ENCODE measurements at regions of chr12 and their contacts with region 1.

Region 1: GRCh38 chr12:10891937-10892336 is 7.9 kb upstream of the PRH1 start:
- DNase-seq: peak; percentile 86 to 89
- H3K4me3 ChIP-seq: no peak overlapping the region
- H3K4me3 Mint-ChIP-seq: peak overlapping the region; percentile 46
- H3K27ac Mint-ChIP-seq: peak overlapping the region; percentile 52
- H3K4me1 ChIP-seq: peaks cover 33% of the 10 kb centered on the region
- H3K4me1 Mint-ChIP-seq: peaks cover 39% of the 10 kb centered on the region
- H3K27me3 ChIP-seq: no peaks in the 10 kb centered on the region
- H3K27me3 Mint-ChIP-seq: no peaks in the 10 kb centered on the region
- CTCF ChIP-seq: no peak

Region 2: GRCh38 chr12:11171145-11171968 is 279.4 kb after region 1 on chr12 and contains the start of gene SMIM10L1:
- CTCF ChIA-PET with region 1: no interaction called
- POLR2A ChIA-PET with region 1: interaction called, 5 read pairs
- intact Hi-C with region 1: loop called (anchors 10 kb)
- DNase-seq: peak; percentile 96 to 97
- H3K4me3 ChIP-seq: peak within 1 kb of the TSS; percentile 98
- H3K4me3 Mint-ChIP-seq: peak within 1 kb of the TSS; percentile 99
- H3K27ac Mint-ChIP-seq: peak within 1 kb of the TSS; percentile 100
- H3K4me1 ChIP-seq: peaks cover 8% of the 10 kb centered on the region; the same call in 1 of the 2 replicates
- H3K4me1 Mint-ChIP-seq: peaks cover 28% of the 10 kb centered on the region
- H3K27me3 ChIP-seq: no peaks in the 10 kb centered on the region
- H3K27me3 Mint-ChIP-seq: no peaks in the 10 kb centered on the region
- CTCF ChIP-seq: peak in 1 of 2 experiments; percentile 8
- total RNA-seq, gene SMIM10L1: 22.4 and 24.9 TPM in 2 replicates